ENCODE measurements at regions of chr16 and their contacts with region 1.

Region 1: GRCh38 chr16:50313596-50314478 is 47.5 kb downstream of the ADCY7 start:
- DNase-seq: peak; percentile 44 to 70
- ATAC-seq: peak; percentile 24 to 83 (median 68)
- H3K4me3 ChIP-seq: no peak overlapping the region
- H3K27ac ChIP-seq: peak overlapping the region in 5 of 10 donors; percentile 7 to 61 (median 29)
- H3K4me1 ChIP-seq: peaks cover 0 to 21% (median 2%) of the 10 kb centered on the region in 9 donors
- H3K27me3 ChIP-seq: no peaks in the 10 kb centered on the region
- CTCF ChIP-seq: no peak

Region 2: DNA sequence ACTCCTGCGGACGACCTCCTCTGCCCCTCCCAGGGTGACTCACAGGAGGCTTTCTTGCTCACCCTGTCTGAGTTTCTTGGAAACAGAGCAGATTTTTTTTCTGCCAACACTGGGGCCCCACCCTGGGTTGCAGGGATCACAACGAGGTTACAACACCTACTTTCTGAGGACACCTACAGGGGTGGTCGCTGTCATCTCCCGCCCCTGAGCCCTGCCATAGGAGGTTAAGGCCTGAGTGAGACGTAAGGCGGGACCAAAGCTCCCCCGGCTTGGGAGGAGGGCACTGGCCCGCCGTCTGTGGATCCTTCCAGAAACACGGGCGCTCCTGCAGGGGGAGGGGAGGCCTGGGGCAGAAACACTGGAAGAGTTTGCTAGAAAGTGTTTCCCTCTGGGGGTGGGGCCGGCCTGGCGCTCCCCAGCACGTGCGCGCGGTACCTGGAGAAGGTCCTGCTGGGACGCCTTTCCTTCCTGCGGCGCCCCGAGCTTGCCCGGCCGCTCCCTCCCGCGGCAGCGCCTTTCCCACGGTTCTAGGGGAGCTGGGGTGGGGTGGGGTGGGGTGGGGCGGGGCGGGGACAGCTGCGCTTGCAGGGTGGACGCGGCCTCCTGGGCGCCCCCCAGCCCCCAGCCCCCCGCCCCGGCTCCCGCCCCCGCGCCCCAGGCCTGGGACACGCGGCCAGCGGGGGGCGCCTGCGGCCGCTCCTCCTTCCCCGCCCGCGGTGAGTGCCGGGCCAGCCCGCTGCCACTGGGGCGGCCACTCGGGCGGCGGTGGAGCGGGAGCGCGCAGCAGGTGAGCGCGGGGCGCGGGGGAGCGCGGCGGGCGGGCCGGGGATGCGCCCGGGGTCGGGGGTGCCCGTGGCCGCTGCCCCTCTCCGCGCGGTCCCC is 68.2 kb before region 1 on chr16:
- intact Hi-C with region 1: loop called in 1 of 10 experiments (anchors 5 kb)
- DNase-seq: peak in 1 of 2 donors; percentile 54
- ATAC-seq: peak; percentile 54 to 85 (median 70)
- H3K4me3 ChIP-seq: peak overlapping the region; percentile 25 to 69 (median 63)
- H3K27ac ChIP-seq: peak overlapping the region in 1 of 10 donors; percentile 64
- H3K4me1 ChIP-seq: peaks cover 0 to 23% (median 16%) of the 10 kb centered on the region in 9 donors
- H3K27me3 ChIP-seq: peaks cover 0 to 34% (median 9%) of the 10 kb centered on the region in 7 donors
- CTCF ChIP-seq: peak in 5 of 9 donors; percentile 10 to 52 (median 36)